Activated CD8-positive, alpha-beta memory T cell treated with anti-CD3 and anti-CD28 coated beads, Interleukin-2, amount 10 ng/mL, durations not matched to agents 7 days and 5 days (primary cell): ENCODE measurements at regions of chr2 and their contacts with region 1.

Region 1: DNA sequence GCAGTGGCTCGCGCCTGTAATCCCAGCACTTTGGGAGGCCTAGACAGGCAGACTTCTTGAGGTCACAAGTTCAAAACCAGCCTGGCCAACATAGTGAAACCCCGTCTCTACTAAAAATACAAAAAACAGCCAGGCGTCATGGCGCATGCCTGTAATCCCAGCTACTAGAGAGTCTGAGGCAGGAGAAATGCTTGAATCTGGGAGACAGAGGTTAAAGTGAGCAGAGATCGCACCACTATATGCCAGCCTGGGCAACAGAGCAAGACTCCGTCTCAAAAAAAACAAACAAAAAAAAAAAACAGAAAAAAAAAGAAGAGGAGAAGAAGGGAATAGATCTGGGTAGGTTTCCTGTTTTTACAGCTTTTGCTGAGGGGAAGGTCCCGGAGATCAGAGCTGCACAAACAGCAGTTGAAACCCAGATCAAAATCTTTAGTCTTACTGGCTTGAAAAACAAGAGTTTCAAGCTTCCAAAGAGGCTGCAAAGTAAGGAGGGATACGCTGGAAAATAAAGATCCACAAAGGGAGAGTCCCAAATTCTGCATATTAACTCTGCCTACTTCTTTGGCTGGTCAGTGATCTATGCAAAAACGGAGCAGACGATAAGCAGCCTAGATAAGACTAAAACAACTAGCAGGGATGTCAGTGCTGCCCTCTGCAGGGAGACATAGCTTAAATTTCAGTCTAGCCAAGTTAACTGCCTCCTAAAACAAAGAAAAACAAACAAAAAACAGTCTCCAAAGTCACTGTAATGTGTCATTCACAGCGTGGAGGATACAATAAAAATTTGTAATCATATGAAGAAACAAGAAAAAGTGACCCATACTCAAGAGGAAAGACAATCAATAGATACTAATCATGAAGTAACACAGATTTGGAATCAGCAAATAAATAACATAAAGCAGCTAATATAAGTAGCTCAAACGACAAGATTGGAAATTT is 74.1 kb downstream of the TLK1 start:
- DNase-seq: peak; percentile 58
- ATAC-seq: peak; percentile 68
- H3K4me3 Mint-ChIP-seq: no peak overlapping the region
- H3K27ac Mint-ChIP-seq: no peak overlapping the region
- H3K4me1 Mint-ChIP-seq: peaks cover 18% of the 10 kb centered on the region
- H3K27me3 Mint-ChIP-seq: no peaks in the 10 kb centered on the region

Region 2: GRCh38 chr2:170973492-170974303 is 112.9 kb before region 1 on chr2:
- CTCF ChIA-PET with region 1: interaction called, 18 read pairs
- DNase-seq: peak; percentile 83
- ATAC-seq: peak; percentile 98
- H3K4me3 Mint-ChIP-seq: peak overlapping the region; percentile 74
- H3K27ac Mint-ChIP-seq: peak overlapping the region; percentile 70
- H3K4me1 Mint-ChIP-seq: peaks cover 6% of the 10 kb centered on the region
- H3K27me3 Mint-ChIP-seq: peaks cover 2% of the 10 kb centered on the region

Region 3: DNA sequence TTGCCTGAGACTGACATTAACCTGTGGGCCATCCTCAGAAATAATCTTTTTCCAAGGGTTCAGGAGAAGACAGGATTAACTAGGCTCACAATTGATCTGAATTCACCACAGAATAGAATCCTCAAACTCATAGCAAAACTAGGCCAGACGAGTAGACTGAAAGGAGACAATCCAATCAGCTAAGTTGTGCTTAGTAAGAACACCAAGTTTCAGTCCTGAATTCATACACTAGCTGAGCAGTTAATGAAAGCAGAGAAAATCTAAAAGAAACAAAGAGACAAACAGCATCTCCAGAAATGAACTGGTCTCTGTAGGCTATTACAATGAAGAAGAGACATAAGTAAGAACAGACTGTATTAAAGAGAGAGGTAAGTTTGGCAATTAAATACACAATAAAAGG is 68.1 kb before region 1 on chr2:
- CTCF ChIA-PET with region 1: no interaction called
- DNase-seq: no peak
- ATAC-seq: peak; percentile 78
- H3K4me3 Mint-ChIP-seq: no peak overlapping the region
- H3K27ac Mint-ChIP-seq: no peak overlapping the region
- H3K4me1 Mint-ChIP-seq: peaks cover 13% of the 10 kb centered on the region
- H3K27me3 Mint-ChIP-seq: no peaks in the 10 kb centered on the region

Region 4: GRCh38 chr2:171098607-171099006 is 12.0 kb after region 1 on chr2:
- CTCF ChIA-PET with region 1: interaction called, 10 read pairs
- DNase-seq: no peak
- ATAC-seq: no peak
- H3K4me3 Mint-ChIP-seq: no peak overlapping the region
- H3K27ac Mint-ChIP-seq: no peak overlapping the region
- H3K4me1 Mint-ChIP-seq: peaks cover 11% of the 10 kb centered on the region
- H3K27me3 Mint-ChIP-seq: no peaks in the 10 kb centered on the region

Region 5: DNA sequence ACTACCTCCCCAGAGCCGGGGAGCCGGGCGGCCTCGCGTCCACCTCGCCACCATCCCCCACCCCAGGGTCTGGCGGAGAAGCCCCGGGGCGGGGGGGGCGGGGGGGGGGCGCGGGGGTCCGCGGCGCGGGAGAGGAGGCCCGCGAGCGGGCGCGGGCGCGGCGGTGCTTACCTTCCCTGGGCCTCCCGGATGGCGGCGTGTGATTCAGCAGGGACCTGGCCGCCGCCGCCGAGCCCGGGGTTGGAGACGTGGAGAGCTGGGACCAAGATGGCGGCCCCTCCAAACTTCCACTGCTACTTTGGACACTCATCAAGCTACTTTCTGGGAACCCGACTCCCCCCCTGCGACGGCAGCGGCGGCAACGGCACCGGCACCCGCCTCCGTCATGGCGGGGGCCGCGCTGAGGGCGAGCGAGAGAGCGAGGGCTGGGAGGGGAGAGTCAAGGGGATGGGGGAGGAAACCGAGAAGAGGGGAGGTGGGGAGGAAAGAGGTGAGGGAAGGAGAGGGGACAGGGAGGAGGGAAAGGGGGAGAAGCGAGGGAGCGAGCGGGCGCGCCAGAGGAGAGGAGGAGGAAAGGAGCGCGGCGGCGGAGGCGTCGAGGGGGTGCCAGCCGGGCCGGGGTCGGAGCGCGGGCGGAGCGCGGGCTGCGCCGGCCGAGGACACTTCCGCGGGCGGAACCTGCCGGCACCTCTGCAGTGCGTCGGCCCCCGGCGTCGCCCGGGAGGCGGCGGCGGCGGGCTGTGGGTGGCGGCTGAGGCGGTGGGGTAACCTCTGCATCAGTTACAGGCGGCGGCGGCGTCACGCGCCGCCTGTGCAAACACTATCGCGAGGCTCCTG is 73.7 kb after region 1 on chr2 and contains the start of gene TLK1:
- CTCF ChIA-PET with region 1: interaction called, 18 read pairs
- DNase-seq: peak; percentile 76
- ATAC-seq: peak; percentile 64
- H3K4me3 Mint-ChIP-seq: peak within 1 kb of the TSS; percentile 91
- H3K27ac Mint-ChIP-seq: peak within 1 kb of the TSS; percentile 95
- H3K4me1 Mint-ChIP-seq: peaks cover 57% of the 10 kb centered on the region
- H3K27me3 Mint-ChIP-seq: no peaks in the 10 kb centered on the region
- total RNA-seq, gene TLK1: 81.3 to 83.2 TPM